Right ventricle myocardium superior (tissue), 1 donor: ENCODE measurements at regions of chr17 and their contacts with region 1.

Region 1: DNA sequence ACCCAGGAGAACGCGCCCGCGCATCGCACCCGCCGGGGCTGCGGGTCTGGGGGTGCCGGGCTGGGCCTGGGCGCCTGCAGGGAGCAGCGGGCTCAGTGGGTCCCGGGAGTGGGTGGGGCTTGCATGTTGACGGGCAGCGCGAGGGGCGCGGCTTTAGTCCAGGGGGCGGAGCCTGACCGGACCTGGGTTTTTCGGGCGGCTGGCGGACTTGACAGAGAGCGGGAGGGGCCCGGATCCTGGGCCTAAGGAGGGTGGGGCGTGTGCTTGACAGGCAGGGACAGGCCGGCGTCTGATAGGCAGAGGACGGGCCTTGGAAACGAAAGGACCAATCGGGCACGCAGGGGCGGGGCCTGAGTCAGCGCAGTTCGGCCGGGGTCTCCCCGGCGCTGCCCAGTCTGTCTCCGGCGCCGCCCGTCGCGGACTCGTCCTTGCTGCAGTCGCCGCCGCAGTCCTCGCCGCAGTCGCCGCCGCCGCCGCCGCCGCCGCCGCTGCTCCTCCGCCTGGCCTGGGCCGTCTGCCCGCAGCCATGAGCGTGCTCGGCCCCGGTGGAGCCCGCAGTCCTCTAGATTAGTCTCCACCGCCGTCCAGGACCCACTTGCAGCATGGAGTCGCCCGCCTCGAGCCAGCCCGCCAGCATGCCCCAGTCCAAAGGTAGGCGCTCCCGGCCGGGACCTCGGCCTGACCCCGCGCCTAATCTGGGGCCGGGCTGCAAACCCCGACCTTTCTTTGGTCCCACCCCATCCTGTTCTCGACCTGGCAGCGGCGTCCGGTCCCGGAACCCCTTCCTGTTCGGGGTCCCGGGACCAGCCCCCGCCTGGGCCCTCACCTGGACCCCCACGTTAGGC is at the start of gene MAP2K3:
- DNase-seq: peak; percentile 99
- ATAC-seq: peak; percentile 85
- total RNA-seq, gene MAP2K3: 30.8 TPM

Region 2: DNA sequence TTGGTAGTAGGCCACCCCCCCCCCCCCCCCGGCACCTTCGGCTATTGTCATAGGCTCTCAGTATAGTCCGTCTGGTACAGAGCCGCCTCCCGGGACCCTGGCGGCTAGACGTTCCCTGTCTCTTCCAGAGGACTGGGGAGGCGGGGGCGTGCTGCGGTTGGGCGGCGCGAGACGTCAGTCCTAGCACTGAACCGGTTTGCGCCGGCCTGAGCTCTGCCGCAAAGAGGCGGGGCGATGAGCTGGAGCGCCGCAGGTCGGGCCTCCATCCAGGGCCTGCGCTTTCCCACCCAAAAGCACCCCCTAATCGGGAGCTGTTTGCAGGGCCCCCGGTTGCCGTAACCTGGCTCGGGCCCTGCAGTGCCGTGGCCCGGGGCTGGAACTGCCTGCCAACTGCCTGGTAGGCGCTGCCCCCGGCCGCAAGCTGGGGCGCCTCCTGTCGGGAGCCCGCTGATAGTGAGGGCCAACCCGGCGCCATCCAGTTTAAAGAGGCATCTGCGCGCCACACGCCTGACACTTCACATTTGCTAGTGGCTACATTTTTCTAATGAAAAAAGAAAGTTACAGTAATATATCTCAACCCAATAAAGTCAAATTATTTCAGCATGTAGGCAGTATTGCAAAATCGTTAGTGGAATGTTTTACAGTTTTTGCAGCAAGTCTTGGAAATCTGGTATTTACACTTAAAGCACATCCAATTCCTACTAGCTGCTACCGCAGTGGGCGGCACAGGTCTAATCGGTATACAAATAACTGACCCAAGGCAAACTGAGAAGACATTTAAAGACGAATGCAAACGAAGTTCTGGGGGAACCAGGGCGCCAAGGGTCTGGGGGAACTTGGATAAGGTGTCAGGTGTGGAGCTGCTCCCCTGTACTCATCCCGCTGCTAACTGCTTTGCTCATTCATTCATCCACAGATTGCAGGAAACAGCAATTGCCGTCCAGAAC is 241.0 kb before region 1 on chr17:
- intact Hi-C with region 1: loop called (anchors 10 kb)
- DNase-seq: peak; percentile 99
- ATAC-seq: peak; percentile 92

Region 3: DNA sequence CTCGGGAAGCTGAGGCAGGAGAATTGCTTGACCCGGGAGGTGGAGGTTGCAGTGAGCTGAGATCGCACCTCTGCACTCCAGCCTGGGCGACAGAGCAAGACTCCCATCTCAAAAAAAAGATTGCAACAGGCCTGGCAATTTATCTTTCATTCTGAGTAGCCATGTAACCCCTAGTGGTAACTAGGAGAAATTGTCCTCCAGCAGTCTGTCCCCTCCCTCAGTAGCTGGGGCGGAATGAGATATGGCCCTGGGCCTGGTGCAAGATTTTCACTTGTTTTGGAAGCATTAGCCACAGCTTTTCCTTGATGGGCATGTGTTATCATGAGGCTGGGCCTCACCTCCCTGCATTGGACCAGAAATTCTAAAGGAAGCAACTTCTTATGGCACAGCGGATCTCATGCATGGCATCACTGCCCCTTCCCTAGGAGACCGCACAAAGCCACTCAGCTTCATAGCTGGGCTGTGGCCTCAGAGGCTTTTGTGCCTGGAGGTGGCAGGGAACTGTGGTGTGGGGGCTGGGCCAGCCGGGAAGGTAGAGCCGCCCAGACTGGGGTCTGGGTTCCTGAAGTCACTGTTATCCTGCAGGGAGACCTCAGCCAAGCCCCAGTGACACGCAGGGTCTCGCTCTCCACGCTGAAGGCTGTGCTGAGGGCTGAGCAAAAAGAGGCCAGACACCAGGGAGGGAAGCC is 44.7 kb before region 1 on chr17:
- intact Hi-C with region 1: no loop called
- DNase-seq: no peak
- ATAC-seq: no peak

Region 4: GRCh38 chr17:21457051-21458026 is 172.8 kb after region 1 on chr17:
- intact Hi-C with region 1: loop called (anchors 5 kb)
- DNase-seq: peak; percentile 94
- ATAC-seq: peak; percentile 97

Region 5: DNA sequence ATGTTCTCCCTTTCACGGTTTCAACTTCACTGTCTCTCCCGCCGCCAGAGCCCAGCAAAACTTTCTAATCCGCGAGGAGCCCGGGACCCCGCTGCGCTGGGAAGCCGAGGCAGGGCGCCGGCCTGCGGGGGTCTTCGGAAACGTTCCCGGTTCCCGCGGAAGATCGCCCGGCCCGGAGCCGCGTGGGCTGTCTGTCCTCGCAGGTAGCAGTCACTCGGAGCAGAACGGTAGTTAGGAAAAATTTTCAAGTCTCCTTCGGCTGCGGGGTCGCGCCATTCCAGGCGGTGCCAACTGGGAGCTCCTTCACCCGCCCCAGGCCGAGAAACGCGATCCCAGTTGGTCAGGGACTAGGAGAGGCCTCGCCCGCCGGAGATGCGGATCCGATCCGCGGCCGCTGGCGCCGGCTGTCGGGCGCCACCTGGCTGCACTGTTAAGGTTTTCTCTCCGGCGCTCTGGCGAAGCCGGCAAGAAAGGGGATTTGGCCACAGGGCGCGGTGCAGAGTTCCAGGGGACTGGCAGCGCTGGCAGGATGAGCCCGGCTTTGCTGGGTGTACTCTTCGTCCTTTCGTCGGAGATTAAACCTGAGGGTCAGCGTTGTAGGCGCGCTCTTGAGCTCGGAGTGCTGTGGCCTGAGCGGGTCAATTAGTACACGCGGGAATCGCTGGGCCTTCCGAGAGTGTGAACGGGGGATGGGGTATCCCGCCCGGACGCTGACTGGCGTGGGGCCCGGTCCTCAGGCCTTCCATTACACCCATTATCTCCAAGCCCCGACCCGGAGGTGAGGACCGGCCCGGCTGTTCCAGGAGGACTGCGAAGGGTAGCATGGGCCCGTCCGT is 227.0 kb after region 1 on chr17:
- intact Hi-C with region 1: loop called (anchors 5 kb)
- DNase-seq: peak; percentile 91
- ATAC-seq: peak; percentile 99

Region 6: GRCh38 chr17:21532763-21533385 is 248.3 kb after region 1 on chr17:
- intact Hi-C with region 1: no loop called
- DNase-seq: no peak
- ATAC-seq: no peak